ENCODE measurements at regions of chr18 and their contacts with region 1.

Region 1: GRCh38 chr18:76492669-76493212 is 2.3 kb downstream of the ZNF516 start:
- DNase-seq: peak; percentile 100
- ATAC-seq: peak; percentile 91 to 96 (median 95)
- H3K4me3 ChIP-seq: peak overlapping the region; percentile 62 to 86 (median 78)
- H3K27ac ChIP-seq: peak overlapping the region; percentile 25 to 92 (median 84)
- H3K4me1 ChIP-seq: peaks cover 0 to 51% (median 31%) of the 10 kb centered on the region in 12 donors
- H3K27me3 ChIP-seq: no peaks in the 10 kb centered on the region
- CTCF ChIP-seq: no peak
- POLR2A ChIP-seq: no peak

Region 2: GRCh38 chr18:76364282-76365259 is 128.2 kb before region 1 on chr18:
- intact Hi-C with region 1: no loop called
- DNase-seq: no peak
- ATAC-seq: no peak
- H3K4me3 ChIP-seq: no peak overlapping the region
- H3K27ac ChIP-seq: peak overlapping the region in 1 of 12 donors; percentile 68
- H3K4me1 ChIP-seq: peaks cover 0 to 7% (median 0%) of the 10 kb centered on the region in 12 donors
- H3K27me3 ChIP-seq: no peaks in the 10 kb centered on the region
- CTCF ChIP-seq: no peak
- POLR2A ChIP-seq: no peak

Region 3: GRCh38 chr18:76398896-76399612 is 93.7 kb before region 1 on chr18:
- intact Hi-C with region 1: loop called in 3 of 10 experiments (anchors 5 kb)
- DNase-seq: peak; percentile 77 to 92 (median 83)
- ATAC-seq: peak; percentile 82 to 94 (median 92)
- H3K4me3 ChIP-seq: no peak overlapping the region
- H3K27ac ChIP-seq: peak overlapping the region in 1 of 12 donors; percentile 18
- H3K4me1 ChIP-seq: peaks cover 0 to 20% (median 3%) of the 10 kb centered on the region in 12 donors
- H3K27me3 ChIP-seq: no peaks in the 10 kb centered on the region
- CTCF ChIP-seq: peak; percentile 90 to 99 (median 93)
- POLR2A ChIP-seq: no peak

Region 4: DNA sequence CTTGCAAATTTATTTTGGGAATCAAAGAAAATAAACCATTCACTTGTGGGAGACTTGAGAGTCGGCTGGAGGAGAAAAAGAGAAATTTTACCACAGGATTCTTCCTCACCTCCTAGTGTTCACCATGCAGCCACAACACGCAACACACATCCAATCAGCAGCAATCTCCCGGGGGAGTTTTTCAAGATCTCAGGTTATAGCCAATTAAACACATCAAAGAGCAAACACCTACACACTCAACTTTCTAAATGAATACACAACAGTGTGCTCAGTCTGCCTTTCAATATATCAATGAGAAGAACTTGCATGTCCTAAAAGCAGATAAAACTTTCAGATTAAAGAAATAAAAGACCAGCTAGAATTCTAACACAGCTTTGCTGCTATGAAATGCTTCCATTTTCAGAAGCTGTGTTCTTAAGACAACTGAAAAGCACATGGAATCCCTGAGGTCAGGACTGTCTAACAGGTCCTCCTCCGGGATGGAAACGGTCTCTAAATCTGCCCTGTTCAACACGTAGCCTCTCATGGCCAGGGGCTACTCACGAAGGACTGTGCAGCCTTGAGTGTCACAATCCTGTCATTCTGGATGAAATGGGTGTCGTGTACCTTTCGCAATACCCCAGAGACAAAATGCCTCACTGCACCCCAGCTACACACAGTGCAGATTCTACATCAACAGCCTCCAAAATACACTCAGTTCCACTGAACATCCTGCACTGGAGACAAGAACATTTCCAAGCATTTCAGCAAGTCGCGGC is 81.9 kb before region 1 on chr18:
- intact Hi-C with region 1: loop called in 3 of 10 experiments (anchors 5 to 10 kb)
- DNase-seq: no peak
- ATAC-seq: no peak
- H3K4me3 ChIP-seq: no peak overlapping the region
- H3K27ac ChIP-seq: no peak overlapping the region
- H3K4me1 ChIP-seq: peaks cover 0 to 51% (median 17%) of the 10 kb centered on the region in 12 donors
- H3K27me3 ChIP-seq: no peaks in the 10 kb centered on the region
- CTCF ChIP-seq: no peak
- POLR2A ChIP-seq: no peak

Region 5: GRCh38 chr18:76450452-76451395 is 42.0 kb before region 1 on chr18:
- intact Hi-C with region 1: loop called in 6 of 10 experiments (anchors 2 to 5 kb)
- DNase-seq: peak; percentile 61 to 82 (median 73)
- ATAC-seq: peak; percentile 66 to 84 (median 77)
- H3K4me3 ChIP-seq: peak overlapping the region; percentile 12 to 73 (median 59)
- H3K27ac ChIP-seq: peak overlapping the region; percentile 29 to 86 (median 76)
- H3K4me1 ChIP-seq: peaks cover under 1 to 85% (median 53%) of the 10 kb centered on the region in 12 donors
- H3K27me3 ChIP-seq: no peaks in the 10 kb centered on the region
- CTCF ChIP-seq: no peak
- POLR2A ChIP-seq: no peak

Region 6: GRCh38 chr18:76686737-76687262 is 194.1 kb after region 1 on chr18:
- intact Hi-C with region 1: loop called in 1 of 10 experiments (anchors 10 kb)
- DNase-seq: peak in 4 of 5 donors; percentile 44 to 61 (median 54)
- ATAC-seq: peak; percentile 79 to 89 (median 86)
- H3K4me3 ChIP-seq: no peak overlapping the region
- H3K27ac ChIP-seq: peak overlapping the region in 4 of 12 donors; percentile 15 to 64 (median 39)
- H3K4me1 ChIP-seq: peaks cover 0 to 12% (median 0%) of the 10 kb centered on the region in 12 donors
- H3K27me3 ChIP-seq: peaks cover 0 to 36% (median 11%) of the 10 kb centered on the region in 9 donors
- CTCF ChIP-seq: peak; percentile 43 to 78 (median 60)
- POLR2A ChIP-seq: no peak

Measured in heart left ventricle (tissue), 16 donors.